HCT116 (cell line): ENCODE measurements at regions of chr1 and their contacts with region 1.

Region 1: GRCh38 chr1:58768971-58769808 is 14.7 kb downstream of the JUN start:
- DNase-seq: no peak
- ATAC-seq: peak; percentile 84
- H3K4me3 ChIP-seq: no peak overlapping the region
- H3K27ac ChIP-seq: no peak overlapping the region
- H3K4me1 ChIP-seq: no peaks in the 10 kb centered on the region; a peak in 1 of 4 replicates
- H3K27me3 ChIP-seq: no peaks in the 10 kb centered on the region
- CTCF ChIP-seq: peak; percentile 68 to 86 (median 83)
- POLR2A ChIP-seq: no peak
- RAD21 ChIP-seq: peak; percentile 87

Region 2: DNA sequence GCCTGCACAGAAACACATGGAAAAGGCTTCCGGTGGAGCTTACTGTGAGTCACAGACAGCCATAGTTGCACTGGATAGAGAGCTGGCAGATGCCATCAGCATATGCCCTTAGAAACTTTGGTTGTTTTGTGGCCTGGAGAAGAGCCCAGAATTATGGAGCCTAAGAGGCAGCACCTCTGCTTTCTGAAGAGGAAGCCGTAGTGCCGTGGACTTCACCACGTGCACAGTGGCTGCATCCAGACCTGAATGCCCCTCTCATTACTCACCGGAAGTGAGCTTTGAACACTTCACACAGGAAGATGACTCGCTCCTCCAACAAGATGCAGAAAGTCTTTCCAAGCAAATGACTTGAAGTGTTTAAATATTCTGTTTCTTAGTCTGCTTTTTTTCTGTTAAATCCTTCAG is 13.7 kb before region 1 on chr1:
- CTCF ChIA-PET with region 1: interaction called, 10 read pairs
- POLR2A ChIA-PET with region 1: no interaction called
- RAD21 ChIA-PET with region 1: interaction called in 1 of 2 experiments, 3 read pairs
- intact Hi-C with region 1: no loop called
- DNase-seq: peak; percentile 70
- ATAC-seq: peak; percentile 83
- H3K4me3 ChIP-seq: peak overlapping the region in 1 of 2 experiments; percentile 14; a peak in 1 of 4 replicates
- H3K27ac ChIP-seq: peak overlapping the region; percentile 54
- H3K4me1 ChIP-seq: peaks cover 28 to 44% of the 10 kb centered on the region in 2 experiments
- H3K27me3 ChIP-seq: no peaks in the 10 kb centered on the region
- CTCF ChIP-seq: no peak
- POLR2A ChIP-seq: peak; percentile 36
- RAD21 ChIP-seq: no peak

Region 3: GRCh38 chr1:59249396-59250137 is 480.4 kb after region 1 on chr1:
- CTCF ChIA-PET with region 1: no interaction called
- POLR2A ChIA-PET with region 1: no interaction called
- RAD21 ChIA-PET with region 1: no interaction called
- intact Hi-C with region 1: no loop called
- DNase-seq: no peak
- ATAC-seq: no peak
- H3K4me3 ChIP-seq: no peak overlapping the region
- H3K27ac ChIP-seq: no peak overlapping the region
- H3K4me1 ChIP-seq: no peaks in the 10 kb centered on the region
- H3K27me3 ChIP-seq: no peaks in the 10 kb centered on the region
- CTCF ChIP-seq: no peak
- POLR2A ChIP-seq: no peak
- RAD21 ChIP-seq: no peak